ENCODE measurements at regions of chr18 and their contacts with region 1.

Region 1: DNA sequence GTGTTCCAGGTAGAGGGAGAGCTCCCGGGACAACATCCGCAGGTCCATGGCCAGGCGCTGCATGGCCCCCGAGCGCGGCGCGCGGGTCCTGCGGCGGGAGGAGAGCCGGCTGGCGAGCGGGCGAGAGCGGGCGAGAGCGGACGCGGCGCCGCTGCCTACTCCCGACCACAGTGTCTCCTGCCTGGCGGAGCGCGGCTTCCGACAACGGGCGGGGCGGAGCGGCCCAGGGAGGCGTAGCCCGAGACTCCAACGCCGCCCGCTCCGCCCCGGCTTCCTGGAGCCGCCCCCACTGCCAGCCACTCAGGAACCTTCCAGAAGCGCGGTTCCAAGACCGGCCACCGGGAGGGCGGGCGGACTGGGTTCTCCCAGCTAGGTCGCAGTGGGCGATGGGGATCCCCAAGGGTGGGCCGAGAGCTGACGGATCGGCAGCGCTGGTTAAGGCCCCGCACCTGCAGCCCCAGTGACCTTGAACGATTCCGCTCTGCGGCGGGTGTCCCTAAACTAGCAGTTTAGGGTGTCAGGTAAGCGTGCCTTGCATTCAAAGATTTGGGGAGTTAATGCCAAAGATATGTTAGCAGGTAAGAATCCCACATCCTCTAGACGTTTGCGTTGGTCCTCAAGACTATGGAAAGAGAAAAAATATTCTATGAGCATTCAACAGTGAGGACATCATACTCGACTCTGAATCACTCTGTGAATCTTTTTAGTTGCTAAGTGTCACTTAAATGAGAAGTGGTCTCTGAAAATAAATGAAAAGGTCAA is at the start of gene ABHD3:
- H3K4me3 ChIP-seq: peak within 1 kb of the TSS; percentile 84
- H3K27ac ChIP-seq: peak within 1 kb of the TSS; percentile 85
- H3K4me1 ChIP-seq: no peaks in the 10 kb centered on the region
- CTCF ChIP-seq: peak; percentile 10; the same call in 1 of the 2 replicates

Region 2: DNA sequence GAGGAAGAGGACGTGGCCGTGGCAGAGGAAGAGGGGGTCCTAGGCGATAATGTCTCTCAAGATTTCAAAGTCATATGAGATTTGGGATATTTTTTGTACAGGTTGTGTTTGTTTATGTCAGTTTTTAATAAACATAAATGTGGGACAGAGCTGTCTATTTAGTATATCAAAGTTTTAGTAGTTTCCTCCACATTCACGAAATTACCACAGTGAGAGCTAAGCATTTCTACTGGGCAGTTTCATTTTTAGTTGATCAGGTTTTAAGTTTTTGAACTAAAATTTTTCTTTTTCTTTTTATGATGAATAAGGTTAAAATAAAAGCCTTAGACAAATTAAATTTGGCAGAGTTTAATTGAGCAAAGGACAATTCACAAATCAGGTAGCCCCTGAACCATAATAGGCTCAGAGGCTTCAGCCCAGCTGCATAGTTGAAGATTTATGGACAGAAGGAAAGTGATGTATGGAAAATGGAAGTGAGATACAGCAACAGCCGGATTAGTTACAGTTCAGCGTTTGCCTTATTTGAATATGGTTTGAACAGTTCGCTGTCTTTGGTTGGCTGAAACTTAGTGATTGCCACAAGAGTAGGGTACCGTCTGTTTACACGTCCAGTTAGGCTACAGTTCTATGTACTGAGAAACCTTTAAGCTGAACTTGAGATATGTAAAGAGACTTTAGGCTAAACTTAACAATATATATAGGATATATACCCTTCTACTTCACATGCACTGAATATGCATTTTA is 75.5 kb before region 1 on chr18:
- CTCF ChIA-PET with region 1: interaction called, 10 read pairs
- POLR2A ChIA-PET with region 1: no interaction called
- H3K4me3 ChIP-seq: no peak overlapping the region
- H3K27ac ChIP-seq: no peak overlapping the region
- H3K4me1 ChIP-seq: no peaks in the 10 kb centered on the region
- CTCF ChIP-seq: no peak

Region 3: GRCh38 chr18:21740724-21741510 is 36.1 kb after region 1 on chr18 and contains the start of gene MIB1:
- CTCF ChIA-PET with region 1: no interaction called
- POLR2A ChIA-PET with region 1: interaction called, 38 read pairs
- H3K4me3 ChIP-seq: peak within 1 kb of the TSS; percentile 96
- H3K27ac ChIP-seq: peak within 1 kb of the TSS; percentile 96
- H3K4me1 ChIP-seq: 0 out of 2 replicates have a peak, but pooled peaks cover 3% of the 10 kb centered on the region
- CTCF ChIP-seq: no peak

Region 4: DNA sequence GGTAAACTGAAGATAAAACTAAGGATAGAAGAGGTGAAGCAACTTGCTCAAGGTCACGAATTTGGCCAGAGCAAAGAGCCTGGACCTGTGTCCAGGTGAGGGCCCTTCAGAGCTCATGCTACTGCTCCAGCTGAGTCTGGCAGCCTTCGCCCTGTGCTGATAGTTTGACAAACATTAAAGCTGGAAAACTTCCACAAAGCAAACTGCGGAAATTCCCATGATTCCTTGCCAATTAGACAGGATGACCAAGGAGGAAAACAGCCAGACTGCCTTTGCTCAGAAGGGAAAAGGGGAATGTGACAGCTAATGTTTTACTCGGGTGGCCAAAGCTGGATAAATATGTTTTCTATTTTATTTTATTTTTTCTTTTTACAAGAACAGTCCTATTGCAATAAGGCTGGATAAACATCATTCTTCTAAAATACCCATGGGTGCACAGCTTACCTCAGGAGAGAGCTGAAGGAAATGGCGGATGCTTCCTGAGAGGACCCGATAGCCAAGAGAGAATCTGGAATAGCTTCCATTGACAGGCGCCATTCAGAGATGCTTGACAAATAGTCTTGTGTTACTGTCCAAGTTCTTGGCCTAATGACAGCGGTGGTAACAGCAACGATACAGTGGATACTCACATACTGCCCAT is 718.2 kb after region 1 on chr18:
- CTCF ChIA-PET with region 1: no interaction called
- POLR2A ChIA-PET with region 1: no interaction called
- H3K4me3 ChIP-seq: no peak overlapping the region
- H3K27ac ChIP-seq: no peak overlapping the region
- H3K4me1 ChIP-seq: no peaks in the 10 kb centered on the region
- CTCF ChIP-seq: no peak